ENCODE measurements at regions of chr9 and their contacts with region 1.

Region 1: GRCh38 chr9:20622330-20623020 is at the start of gene MLLT3:
- DNase-seq: peak; percentile 91
- H3K4me3 ChIP-seq: peak within 1 kb of the TSS; percentile 89
- H3K27ac ChIP-seq: peak within 1 kb of the TSS; percentile 62
- H3K27me3 ChIP-seq: no peaks in the 10 kb centered on the region
- CTCF ChIP-seq: 0 out of 2 replicates have a peak, but pooled peaks have one; percentile 7
- polyA plus RNA-seq, gene MLLT3: 26.5 and 32.5 TPM in 2 replicates

Region 2: GRCh38 chr9:20356403-20357035 is 266.0 kb before region 1 on chr9:
- CTCF ChIA-PET with region 1: interaction called, 40 read pairs
- POLR2A ChIA-PET with region 1: interaction called, 21 read pairs
- DNase-seq: peak; percentile 69
- H3K4me3 ChIP-seq: no peak overlapping the region
- H3K27ac ChIP-seq: peak overlapping the region; percentile 53
- H3K27me3 ChIP-seq: no peaks in the 10 kb centered on the region
- CTCF ChIP-seq: peak; percentile 70

Region 3: DNA sequence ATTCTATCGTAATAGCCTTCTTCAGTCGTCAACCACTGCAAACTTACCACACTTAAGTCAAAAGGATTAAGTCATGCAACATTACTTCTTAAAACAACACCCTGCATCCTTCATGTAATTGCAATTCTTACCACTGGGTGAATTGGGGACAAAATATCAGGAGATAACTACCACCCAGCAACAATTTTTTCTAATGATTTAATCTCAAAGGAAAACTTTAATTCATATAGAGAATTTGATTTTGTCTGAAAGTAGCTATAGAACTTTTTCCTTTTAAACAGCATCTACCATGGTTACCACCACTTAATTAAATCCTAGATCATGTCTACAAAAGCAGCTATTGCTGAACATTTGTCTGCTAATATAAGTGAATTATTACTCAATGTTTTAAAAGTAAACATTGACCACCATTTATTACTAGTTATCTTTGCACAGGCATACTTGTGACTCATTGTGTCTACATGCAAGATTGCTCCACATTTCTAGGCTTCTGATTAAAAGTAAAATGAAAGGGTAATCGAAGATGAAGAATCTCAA is 10.7 kb before region 1 on chr9:
- CTCF ChIA-PET with region 1: interaction called, 32 read pairs
- POLR2A ChIA-PET with region 1: interaction called, 15 read pairs
- DNase-seq: no peak
- H3K4me3 ChIP-seq: peak overlapping the region; percentile 7; the same call in 1 of the 2 replicates
- H3K27ac ChIP-seq: no peak overlapping the region
- H3K27me3 ChIP-seq: no peaks in the 10 kb centered on the region
- CTCF ChIP-seq: peak; percentile 57

Region 4: DNA sequence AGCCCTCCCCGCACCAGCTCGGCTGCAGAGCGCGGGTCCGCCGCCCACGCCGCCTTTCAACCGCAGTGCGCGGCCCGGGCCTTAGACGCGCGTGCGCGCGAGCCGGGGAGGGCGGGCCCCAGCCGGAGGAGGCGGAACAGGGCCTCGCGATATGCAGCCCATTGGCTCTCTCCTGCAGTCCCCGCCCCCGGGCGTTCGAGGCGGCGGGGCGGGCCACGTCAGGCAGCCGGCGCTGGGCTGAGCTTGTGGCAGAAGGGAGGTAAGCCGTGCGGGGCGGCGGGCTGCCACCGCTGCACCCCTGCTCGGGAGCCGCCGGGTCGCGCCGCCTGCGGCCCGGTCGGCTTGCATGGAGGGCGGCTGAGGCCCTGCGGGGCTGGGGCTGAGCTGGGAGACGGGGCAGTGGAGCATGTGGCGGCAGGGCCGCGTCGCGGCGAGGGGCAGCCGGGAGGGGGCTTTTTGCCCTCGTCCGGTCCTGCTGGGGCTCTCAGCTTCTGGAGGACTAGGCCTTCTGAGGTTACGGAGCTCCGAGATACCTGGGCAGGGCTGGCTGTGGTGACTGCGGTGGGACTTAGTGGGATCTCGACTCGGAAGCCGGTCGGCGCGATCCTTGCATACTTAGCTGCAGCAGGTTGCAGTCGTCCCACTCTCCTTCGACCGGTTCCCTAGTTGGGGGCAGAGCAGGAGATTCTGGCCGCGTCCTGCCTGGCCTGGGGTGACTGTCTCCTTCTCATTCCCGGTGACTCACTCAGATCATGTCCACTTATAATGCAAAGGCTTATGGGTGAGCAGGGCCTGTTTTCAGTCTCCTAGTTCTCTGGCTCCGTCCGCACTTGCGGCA is 61.8 kb after region 1 on chr9 and contains the start of gene FOCAD:
- CTCF ChIA-PET with region 1: interaction called, 5 read pairs
- POLR2A ChIA-PET with region 1: interaction called, 18 read pairs
- DNase-seq: peak; percentile 79
- H3K4me3 ChIP-seq: peak within 1 kb of the TSS; percentile 85
- H3K27ac ChIP-seq: peak within 1 kb of the TSS; percentile 86
- H3K27me3 ChIP-seq: no peaks in the 10 kb centered on the region
- CTCF ChIP-seq: no peak
- polyA plus RNA-seq, gene FOCAD: 45.1 and 49.7 TPM in 2 replicates

Region 5: GRCh38 chr9:20941174-20941690 is 318.8 kb after region 1 on chr9:
- CTCF ChIA-PET with region 1: interaction called, 154 read pairs
- POLR2A ChIA-PET with region 1: no interaction called
- DNase-seq: peak; percentile 36
- H3K4me3 ChIP-seq: no peak overlapping the region
- H3K27ac ChIP-seq: no peak overlapping the region
- H3K27me3 ChIP-seq: no peaks in the 10 kb centered on the region
- CTCF ChIP-seq: peak; percentile 88

Region 6: GRCh38 chr9:21102305-21102704 is 479.8 kb after region 1 on chr9:
- CTCF ChIA-PET with region 1: interaction called, 15 read pairs
- POLR2A ChIA-PET with region 1: no interaction called
- DNase-seq: no peak
- H3K4me3 ChIP-seq: no peak overlapping the region
- H3K27ac ChIP-seq: no peak overlapping the region
- H3K27me3 ChIP-seq: no peaks in the 10 kb centered on the region
- CTCF ChIP-seq: no peak